AG04449 (cell line): ENCODE measurements at regions of chr7 and their contacts with region 1.

Region 1: GRCh38 chr7:45890902-45891461 is 2.7 kb downstream of the IGFBP1 start:
- DNase-seq: no peak
- H3K4me3 ChIP-seq: no peak overlapping the region
- CTCF ChIP-seq: peak; percentile 30

Region 2: GRCh38 chr7:45876454-45876853 is 14.5 kb before region 1 on chr7:
- CTCF ChIA-PET with region 1: interaction called, 10 read pairs
- POLR2A ChIA-PET with region 1: no interaction called
- DNase-seq: no peak
- H3K4me3 ChIP-seq: no peak overlapping the region
- CTCF ChIP-seq: no peak

Region 3: GRCh38 chr7:45902820-45903219 is 11.8 kb after region 1 on chr7:
- CTCF ChIA-PET with region 1: interaction called, 28 read pairs
- POLR2A ChIA-PET with region 1: no interaction called
- DNase-seq: no peak
- H3K4me3 ChIP-seq: no peak overlapping the region
- CTCF ChIP-seq: no peak

Region 4: GRCh38 chr7:47179812-47180515 is 1289.0 kb after region 1 on chr7:
- CTCF ChIA-PET with region 1: interaction called, 63 read pairs
- POLR2A ChIA-PET with region 1: no interaction called
- DNase-seq: peak; percentile 24
- H3K4me3 ChIP-seq: no peak overlapping the region
- CTCF ChIP-seq: peak; percentile 74

Region 5: GRCh38 chr7:47254081-47255006 is 1363.4 kb after region 1 on chr7:
- CTCF ChIA-PET with region 1: interaction called, 23 read pairs
- POLR2A ChIA-PET with region 1: no interaction called
- DNase-seq: no peak
- H3K4me3 ChIP-seq: peak overlapping the region; percentile 66
- CTCF ChIP-seq: peak; percentile 75